ENCODE measurements at regions of chr10 and their contacts with region 1.

Region 1: DNA sequence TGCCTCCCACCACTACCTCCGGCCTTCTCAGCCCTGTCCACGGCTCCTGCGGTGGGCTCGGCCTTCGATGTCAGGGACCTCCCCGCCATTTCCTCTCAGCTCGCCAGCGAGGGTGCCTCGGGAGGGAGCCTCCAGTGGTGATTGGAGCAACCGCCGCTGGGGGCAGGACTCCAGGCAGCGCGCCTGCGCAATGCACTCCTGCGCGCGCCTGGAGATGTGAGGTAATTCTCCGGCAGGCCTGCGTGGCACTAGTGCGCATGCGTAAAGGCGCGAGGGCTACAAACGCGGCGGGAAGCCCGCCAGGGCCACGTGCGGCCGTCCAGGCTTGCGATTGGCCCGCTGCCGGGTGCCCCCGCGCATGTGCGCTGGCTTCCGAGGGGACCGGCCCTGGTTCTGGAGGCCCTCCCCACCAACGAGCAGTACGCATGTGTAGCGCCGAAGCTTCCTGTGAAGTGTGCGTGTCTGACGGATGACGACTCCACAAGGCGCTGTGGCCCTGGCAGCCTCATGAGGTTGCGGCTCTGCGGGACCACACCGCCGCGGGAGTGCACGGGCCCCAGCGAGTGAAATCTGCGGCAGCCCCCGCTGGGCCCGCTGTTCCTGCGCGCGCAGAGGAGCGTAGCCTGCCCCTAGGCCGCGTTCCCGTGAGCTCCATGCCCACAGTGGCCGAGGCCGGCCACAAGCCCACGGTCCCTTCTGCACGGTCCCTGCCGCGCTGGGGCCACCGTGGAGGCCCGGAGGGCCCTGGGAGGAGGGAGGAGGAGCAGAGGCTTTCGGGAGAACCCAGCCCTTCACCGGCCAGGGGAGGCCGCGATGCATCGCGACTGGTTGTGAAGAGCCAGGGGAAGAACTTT is at the start of gene SYCE1:
- DNase-seq: peak in 2 of 3 donors; percentile 32 to 64
- ATAC-seq: peak in 1 of 2 donors; percentile 42
- H3K4me3 ChIP-seq: no peak within 1 kb of the TSS
- H3K27ac ChIP-seq: no peak within 1 kb of the TSS
- H3K4me1 ChIP-seq: no peaks in the 10 kb centered on the region
- H3K27me3 ChIP-seq: no peaks in the 10 kb centered on the region
- total RNA-seq, gene SYCE1: 0.09 to 1.6 (median 0.37) TPM in 3 of 4 donors, not detected in the other

Region 2: DNA sequence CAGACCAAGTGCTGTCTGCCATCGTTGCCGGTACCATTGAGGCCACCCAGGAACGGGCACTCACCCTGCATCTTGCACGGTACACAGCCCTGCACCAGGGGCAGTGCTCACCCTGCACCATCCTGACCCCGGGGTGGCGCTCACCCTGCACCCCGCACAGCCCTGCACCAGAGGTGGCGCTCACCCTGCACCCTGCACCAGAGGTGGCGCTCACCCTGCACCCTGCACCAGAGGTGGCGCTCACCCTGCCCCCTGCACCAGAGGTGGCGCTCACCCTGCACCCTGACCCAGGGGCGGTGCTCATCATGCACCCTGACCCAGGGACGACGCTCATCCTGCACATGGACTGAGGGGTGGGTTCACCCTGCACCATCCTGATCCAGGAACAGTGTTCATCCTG is 263.5 kb before region 1 on chr10:
- intact Hi-C with region 1: no loop called
- DNase-seq: peak in 1 of 3 donors; percentile 27
- ATAC-seq: peak in 1 of 2 donors; percentile 25
- H3K4me3 ChIP-seq: no peak overlapping the region
- H3K27ac ChIP-seq: no peak overlapping the region
- H3K4me1 ChIP-seq: peaks cover 3% of the 10 kb centered on the region
- H3K27me3 ChIP-seq: no peaks in the 10 kb centered on the region

Region 3: GRCh38 chr10:133422821-133423771 is 142.6 kb before region 1 on chr10:
- intact Hi-C with region 1: loop called in 1 of 4 experiments (anchors 5 kb)
- DNase-seq: peak in 1 of 3 donors; percentile 57
- ATAC-seq: peak; percentile 5 to 25
- H3K4me3 ChIP-seq: peak overlapping the region; percentile 39
- H3K27ac ChIP-seq: no peak overlapping the region
- H3K4me1 ChIP-seq: peaks cover 2% of the 10 kb centered on the region
- H3K27me3 ChIP-seq: no peaks in the 10 kb centered on the region